Upper lobe of right lung (tissue), 1 donor: ENCODE measurements at regions of chr20 and their contacts with region 1.

Region 1: GRCh38 chr20:1437235-1437904 is 29.3 kb downstream of the NSFL1C start:
- DNase-seq: peak; percentile 87
- ATAC-seq: peak; percentile 84
- H3K4me3 ChIP-seq: no peak overlapping the region
- H3K27ac ChIP-seq: no peak overlapping the region
- H3K4me1 ChIP-seq: peaks cover 10% of the 10 kb centered on the region
- H3K27me3 ChIP-seq: no peaks in the 10 kb centered on the region
- CTCF ChIP-seq: peak; percentile 86

Region 2: GRCh38 chr20:1313236-1313964 is 124.0 kb before region 1 on chr20:
- intact Hi-C with region 1: loop called (anchors 5 kb)
- DNase-seq: peak; percentile 84
- ATAC-seq: peak; percentile 91
- H3K4me3 ChIP-seq: no peak overlapping the region
- H3K27ac ChIP-seq: no peak overlapping the region
- H3K4me1 ChIP-seq: no peaks in the 10 kb centered on the region
- H3K27me3 ChIP-seq: no peaks in the 10 kb centered on the region
- CTCF ChIP-seq: peak; percentile 97

Region 3: GRCh38 chr20:1389703-1390580 is 47.4 kb before region 1 on chr20:
- intact Hi-C with region 1: no loop called
- DNase-seq: no peak
- ATAC-seq: no peak
- H3K4me3 ChIP-seq: peak overlapping the region; percentile 85
- H3K27ac ChIP-seq: peak overlapping the region; percentile 88
- H3K4me1 ChIP-seq: peaks cover 52% of the 10 kb centered on the region
- H3K27me3 ChIP-seq: no peaks in the 10 kb centered on the region
- CTCF ChIP-seq: no peak